ENCODE measurements at regions of chr9 and their contacts with region 1.

Region 1: GRCh38 chr9:127742435-127743088 is 7.5 kb upstream of the TOR2A start:
- DNase-seq: no peak
- H3K4me3 Mint-ChIP-seq: no peak overlapping the region
- H3K27ac Mint-ChIP-seq: no peak overlapping the region
- H3K4me1 Mint-ChIP-seq: no peaks in the 10 kb centered on the region
- H3K27me3 Mint-ChIP-seq: peaks cover 9% of the 10 kb centered on the region
- CTCF ChIP-seq: no peak

Region 2: GRCh38 chr9:127568971-127569885 is 173.3 kb before region 1 on chr9:
- CTCF ChIA-PET with region 1: no interaction called
- POLR2A ChIA-PET with region 1: interaction called, 10 read pairs
- intact Hi-C with region 1: no loop called
- DNase-seq: peak; percentile 86
- H3K4me3 Mint-ChIP-seq: peak overlapping the region; percentile 98
- H3K27ac Mint-ChIP-seq: peak overlapping the region; percentile 55
- H3K4me1 Mint-ChIP-seq: peaks cover 32% of the 10 kb centered on the region
- H3K27me3 Mint-ChIP-seq: no peaks in the 10 kb centered on the region
- CTCF ChIP-seq: no peak

Region 3: DNA sequence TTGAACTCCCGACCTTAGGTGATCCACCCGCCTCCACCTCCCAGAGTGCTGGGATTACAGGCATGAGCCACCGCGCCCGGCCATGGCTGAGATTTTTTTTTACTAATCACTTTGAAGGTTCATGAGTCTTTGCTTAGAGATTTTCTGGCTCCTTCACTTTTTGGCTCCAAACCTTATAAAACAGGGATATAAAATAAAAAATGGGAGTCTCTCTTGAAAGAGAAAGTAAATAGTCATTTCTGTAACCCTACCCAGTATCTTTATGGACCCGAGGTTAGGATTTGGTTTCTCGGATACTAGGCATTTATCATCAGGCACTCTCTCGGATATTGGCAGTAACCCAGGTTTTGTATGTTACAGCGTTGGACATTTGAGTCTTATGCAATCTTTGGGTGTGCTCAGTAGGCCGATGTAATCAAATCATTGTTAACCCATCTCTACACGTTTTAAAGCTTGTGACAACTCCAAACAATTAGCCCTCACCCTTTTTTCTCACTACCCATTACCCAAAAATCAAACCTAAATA is 105.2 kb before region 1 on chr9:
- CTCF ChIA-PET with region 1: no interaction called
- POLR2A ChIA-PET with region 1: no interaction called
- intact Hi-C with region 1: no loop called
- DNase-seq: peak; percentile 87
- H3K4me3 Mint-ChIP-seq: peak overlapping the region; percentile 59
- H3K27ac Mint-ChIP-seq: peak overlapping the region; percentile 76
- H3K4me1 Mint-ChIP-seq: peaks cover 24% of the 10 kb centered on the region
- H3K27me3 Mint-ChIP-seq: no peaks in the 10 kb centered on the region
- CTCF ChIP-seq: no peak

Region 4: DNA sequence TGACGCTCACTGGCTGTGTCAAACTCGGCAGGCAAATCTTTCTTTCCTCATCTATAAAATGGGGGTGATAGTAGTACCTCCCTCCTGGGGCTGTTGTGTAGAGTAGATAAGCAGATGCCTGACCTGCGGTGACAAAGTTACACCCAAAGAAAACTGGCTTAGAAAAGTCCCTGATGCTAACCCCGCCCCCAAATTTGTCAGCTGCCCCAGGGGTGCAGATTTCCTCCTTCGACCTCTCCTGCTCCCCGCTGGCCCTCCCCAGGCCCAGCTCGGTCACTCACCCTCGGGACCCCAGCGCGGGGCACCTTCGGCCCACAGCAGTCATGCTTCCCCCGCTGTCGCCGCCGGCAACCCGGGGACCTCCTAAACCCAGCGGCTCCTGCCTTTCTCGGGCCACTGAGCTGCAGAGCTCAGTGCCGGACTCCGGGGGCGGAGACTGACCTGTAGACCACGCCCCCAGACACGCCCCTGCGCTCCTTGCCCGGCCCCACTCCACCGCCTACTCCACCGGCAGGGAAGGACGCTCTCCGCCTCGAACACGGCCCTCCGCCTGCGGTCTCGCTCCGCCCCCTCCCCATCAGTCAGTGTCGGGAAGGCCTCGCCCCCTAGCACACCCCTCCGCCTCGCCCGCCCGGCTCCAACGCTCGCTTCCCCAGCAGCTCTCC is 28.5 kb after region 1 on chr9:
- CTCF ChIA-PET with region 1: interaction called, 3 read pairs
- POLR2A ChIA-PET with region 1: interaction called, 50 read pairs
- intact Hi-C with region 1: no loop called
- DNase-seq: peak; percentile 96
- H3K4me3 Mint-ChIP-seq: peak overlapping the region; percentile 83
- H3K27ac Mint-ChIP-seq: peak overlapping the region; percentile 43
- H3K4me1 Mint-ChIP-seq: no peaks in the 10 kb centered on the region
- H3K27me3 Mint-ChIP-seq: no peaks in the 10 kb centered on the region
- CTCF ChIP-seq: no peak

Region 5: DNA sequence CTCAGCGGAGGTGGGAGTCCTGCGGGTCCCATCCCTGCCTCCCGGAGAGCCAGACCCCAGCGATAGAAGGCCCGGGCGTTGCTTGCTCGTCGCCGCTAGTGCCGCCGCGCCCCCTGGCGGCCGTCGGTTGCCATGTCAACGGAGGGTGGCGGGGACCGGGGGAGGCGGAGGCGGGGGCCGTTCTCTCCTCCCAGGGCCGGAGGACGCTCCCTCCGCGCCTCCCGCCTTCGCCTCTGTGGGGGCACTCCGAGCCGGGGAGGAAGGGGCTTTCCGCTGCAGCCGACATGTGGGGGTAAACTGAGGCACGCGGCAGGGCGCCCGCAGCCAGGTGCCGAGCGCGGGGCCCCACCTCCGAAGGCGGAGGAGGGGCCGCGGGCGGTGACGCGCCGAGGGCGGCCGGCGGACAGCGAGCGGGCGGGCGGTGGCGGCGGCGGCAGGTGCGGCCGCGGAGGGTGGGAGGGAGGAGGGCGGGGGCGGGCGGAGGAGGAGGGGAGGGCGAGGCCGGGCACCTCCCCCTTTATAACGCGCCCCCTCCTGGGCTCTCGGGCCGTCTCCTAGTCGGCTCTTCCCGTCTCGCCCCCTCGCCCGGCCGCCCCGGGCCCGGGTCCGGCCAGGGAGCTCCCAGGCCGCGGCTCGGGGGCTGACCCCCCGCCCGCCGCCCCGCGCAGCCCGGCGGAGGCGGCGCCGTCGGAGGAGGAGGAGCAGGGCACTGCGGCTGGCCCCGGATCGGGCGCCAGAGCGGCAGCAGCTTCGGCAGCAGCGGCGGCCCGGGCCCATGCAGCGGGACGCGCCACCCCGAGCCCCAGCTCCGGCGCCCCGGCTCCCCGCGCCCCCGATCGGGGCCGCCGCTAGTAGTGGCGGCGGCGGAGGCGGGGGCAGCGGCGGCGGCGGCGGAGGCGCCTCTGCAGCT is 42.7 kb after region 1 on chr9:
- CTCF ChIA-PET with region 1: interaction called, 13 read pairs
- POLR2A ChIA-PET with region 1: interaction called, 36 read pairs
- intact Hi-C with region 1: loop called (anchors 1 kb)
- DNase-seq: peak; percentile 76
- H3K4me3 Mint-ChIP-seq: peak overlapping the region; percentile 90
- H3K27ac Mint-ChIP-seq: peak overlapping the region; percentile 63
- H3K4me1 Mint-ChIP-seq: peaks cover 9% of the 10 kb centered on the region
- H3K27me3 Mint-ChIP-seq: no peaks in the 10 kb centered on the region
- CTCF ChIP-seq: peak; percentile 92

Region 6: GRCh38 chr9:127802576-127803443 is 60.2 kb after region 1 on chr9 and contains the start of gene FPGS:
- CTCF ChIA-PET with region 1: no interaction called
- POLR2A ChIA-PET with region 1: interaction called, 20 read pairs
- intact Hi-C with region 1: no loop called
- DNase-seq: peak; percentile 80
- H3K4me3 Mint-ChIP-seq: peak within 1 kb of the TSS; percentile 87
- H3K27ac Mint-ChIP-seq: peak within 1 kb of the TSS; percentile 96
- H3K4me1 Mint-ChIP-seq: peaks cover 18% of the 10 kb centered on the region
- H3K27me3 Mint-ChIP-seq: no peaks in the 10 kb centered on the region
- CTCF ChIP-seq: no peak
- total RNA-seq, gene FPGS: 130 and 131 TPM in 2 replicates

Measured in MCF 10A (cell line).